ENCODE measurements at regions of chr11 and their contacts with region 1.

Region 1: GRCh38 chr11:45332276-45332934 is 46.3 kb upstream of the SYT13 start:
- DNase-seq: peak in 1 of 2 donors; percentile 73
- ATAC-seq: peak in 2 of 3 donors; percentile 70 to 76
- H3K4me3 ChIP-seq: no peak overlapping the region
- H3K4me3 Mint-ChIP-seq: no peak overlapping the region
- H3K27ac ChIP-seq: no peak overlapping the region
- H3K27ac Mint-ChIP-seq: no peak overlapping the region
- H3K4me1 ChIP-seq: no peaks in the 10 kb centered on the region
- H3K4me1 Mint-ChIP-seq: no peaks in the 10 kb centered on the region
- H3K27me3 ChIP-seq: no peaks in the 10 kb centered on the region
- H3K27me3 Mint-ChIP-seq: peaks cover 17 to 27% of the 10 kb centered on the region in 2 donors
- CTCF ChIP-seq: peak; percentile 95

Region 2: DNA sequence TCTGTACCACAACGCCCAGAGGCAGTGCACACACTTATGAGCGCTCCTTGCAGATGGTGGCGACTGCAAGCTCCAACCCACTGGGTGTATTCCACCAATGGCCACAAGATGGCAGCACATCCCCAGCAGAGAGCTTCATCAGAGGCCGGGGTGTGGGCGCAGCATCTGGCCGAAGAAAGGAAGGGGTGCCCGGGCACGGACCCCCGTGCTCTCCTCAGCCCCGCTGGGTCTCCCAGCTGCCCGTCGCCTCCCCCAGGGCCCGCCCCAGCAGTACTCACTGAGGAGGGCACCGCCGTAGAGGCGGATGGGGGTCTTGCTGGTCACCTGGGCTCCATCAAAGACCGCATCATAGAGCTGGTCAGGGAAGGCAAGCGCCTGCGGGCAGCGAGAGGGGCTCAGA is 395.9 kb before region 1 on chr11:
- intact Hi-C with region 1: loop called (anchors 5 kb)
- DNase-seq: peak; percentile 81 to 91
- ATAC-seq: peak; percentile 80 to 97 (median 96)
- H3K4me3 ChIP-seq: no peak overlapping the region
- H3K4me3 Mint-ChIP-seq: no peak overlapping the region
- H3K27ac ChIP-seq: no peak overlapping the region
- H3K27ac Mint-ChIP-seq: peak overlapping the region in 1 of 2 donors; percentile 38
- H3K4me1 ChIP-seq: peaks cover 6% of the 10 kb centered on the region
- H3K4me1 Mint-ChIP-seq: peaks cover 0 to 4% of the 10 kb centered on the region in 2 donors
- H3K27me3 ChIP-seq: no peaks in the 10 kb centered on the region
- H3K27me3 Mint-ChIP-seq: no peaks in the 10 kb centered on the region
- CTCF ChIP-seq: peak; percentile 91

Measured in natural killer cell (primary cell).